Activated naive CD4-positive, alpha-beta T cell treated with anti-CD3 and anti-CD28 coated beads for 36 hours (primary cell): ENCODE measurements at regions of chr1 and their contacts with region 1.

Region 1: DNA sequence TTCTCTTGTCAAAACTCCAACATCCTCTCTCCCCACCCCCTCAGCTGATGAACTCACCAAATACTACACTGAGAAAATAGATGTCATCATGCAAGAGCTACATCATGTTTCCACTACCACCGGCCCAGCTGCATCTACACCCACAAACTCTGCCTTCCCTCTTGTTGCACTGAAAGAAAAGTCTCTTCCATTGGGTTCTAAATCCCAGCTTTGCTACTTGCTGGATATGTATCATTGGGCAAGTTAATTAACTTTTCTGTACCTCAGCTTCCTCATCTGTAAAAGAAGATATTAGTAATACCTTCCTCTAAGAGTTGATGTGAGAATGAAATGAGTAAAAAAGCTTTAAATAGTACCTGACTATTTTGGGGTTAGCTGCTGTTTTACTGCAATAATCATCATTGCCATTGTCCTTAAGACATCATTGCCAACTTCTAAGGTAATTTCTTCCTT is 108.6 kb downstream of the OLFML2B start:
- DNase-seq: peak; percentile 83
- H3K4me3 Mint-ChIP-seq: no peak overlapping the region
- H3K27ac Mint-ChIP-seq: no peak overlapping the region
- H3K4me1 Mint-ChIP-seq: peaks cover 35% of the 10 kb centered on the region
- H3K27me3 Mint-ChIP-seq: no peaks in the 10 kb centered on the region

Region 2: DNA sequence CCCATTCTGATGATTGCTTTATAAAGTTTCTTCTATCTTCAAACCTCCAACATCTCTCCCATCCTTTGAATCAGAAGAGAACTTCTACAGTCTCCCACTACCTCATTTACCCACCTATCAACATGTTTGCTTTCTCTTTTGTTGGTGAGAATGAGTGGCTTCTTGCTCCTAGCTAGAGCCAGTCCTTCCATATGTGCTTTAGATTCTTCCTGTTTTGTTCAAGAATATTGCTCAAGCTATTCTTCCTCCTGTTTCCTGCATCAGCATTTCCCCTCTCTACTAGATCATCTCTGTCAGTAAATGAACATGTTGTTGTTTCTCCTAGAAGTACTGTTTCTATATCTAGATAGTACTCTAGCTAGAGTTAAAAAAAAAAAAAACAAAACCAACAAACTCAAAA is 142.7 kb before region 1 on chr1:
- CTCF ChIA-PET with region 1: no interaction called
- intact Hi-C with region 1: loop called (anchors 1 kb)
- DNase-seq: no peak
- H3K4me3 Mint-ChIP-seq: no peak overlapping the region
- H3K27ac Mint-ChIP-seq: no peak overlapping the region
- H3K4me1 Mint-ChIP-seq: peaks cover 29% of the 10 kb centered on the region
- H3K27me3 Mint-ChIP-seq: no peaks in the 10 kb centered on the region

Region 3: DNA sequence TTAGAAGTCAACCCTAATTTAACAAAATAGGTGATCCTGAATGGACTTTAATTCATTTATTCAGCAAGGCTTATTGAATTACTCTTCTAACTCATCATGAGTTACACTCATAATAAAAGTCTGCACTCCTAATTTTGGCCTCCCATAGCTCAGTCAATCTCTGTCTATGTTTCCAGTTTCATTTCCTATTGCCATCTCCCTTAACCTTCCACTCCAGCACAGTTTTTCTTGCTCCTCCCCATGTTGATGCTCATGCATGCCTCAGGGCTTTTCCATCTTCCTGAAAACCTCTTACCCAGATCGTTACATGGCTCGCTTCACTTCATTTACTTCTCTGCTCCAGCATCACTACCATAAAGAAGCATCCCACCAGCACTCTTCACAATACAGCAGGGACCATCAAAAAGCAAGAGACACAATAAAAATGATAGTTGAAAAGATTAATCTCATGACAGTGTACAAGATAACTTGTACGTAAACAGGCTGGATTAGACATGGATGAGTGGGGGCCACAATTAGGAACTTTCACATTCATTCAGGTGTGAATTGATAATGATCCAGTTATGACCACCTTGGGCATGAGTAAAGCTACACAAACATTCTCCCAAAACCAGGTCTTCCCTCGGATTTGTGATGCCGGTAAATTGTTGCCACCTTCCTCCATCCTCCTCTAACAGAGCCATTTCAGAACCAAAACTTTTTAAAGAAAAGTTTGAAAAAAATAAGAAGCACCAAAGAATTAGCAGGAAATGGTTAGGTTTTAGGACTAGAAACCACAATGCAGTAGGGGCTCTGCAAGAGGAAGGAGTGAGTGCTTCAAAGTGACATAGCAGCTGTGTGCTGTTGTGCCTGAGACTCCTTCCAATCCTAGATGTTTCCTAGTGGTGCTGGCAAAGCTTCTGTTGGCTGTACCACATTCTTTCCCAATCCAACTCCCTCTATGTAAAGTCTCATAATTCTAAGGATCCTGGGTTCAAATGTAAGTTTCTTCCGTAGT is 18.8 kb after region 1 on chr1:
- CTCF ChIA-PET with region 1: interaction called, 10 read pairs
- intact Hi-C with region 1: loop called (anchors 1 kb)
- DNase-seq: peak; percentile 27
- H3K4me3 Mint-ChIP-seq: peak overlapping the region; percentile 48
- H3K27ac Mint-ChIP-seq: peak overlapping the region; percentile 83
- H3K4me1 Mint-ChIP-seq: peaks cover 53% of the 10 kb centered on the region
- H3K27me3 Mint-ChIP-seq: no peaks in the 10 kb centered on the region

Region 4: DNA sequence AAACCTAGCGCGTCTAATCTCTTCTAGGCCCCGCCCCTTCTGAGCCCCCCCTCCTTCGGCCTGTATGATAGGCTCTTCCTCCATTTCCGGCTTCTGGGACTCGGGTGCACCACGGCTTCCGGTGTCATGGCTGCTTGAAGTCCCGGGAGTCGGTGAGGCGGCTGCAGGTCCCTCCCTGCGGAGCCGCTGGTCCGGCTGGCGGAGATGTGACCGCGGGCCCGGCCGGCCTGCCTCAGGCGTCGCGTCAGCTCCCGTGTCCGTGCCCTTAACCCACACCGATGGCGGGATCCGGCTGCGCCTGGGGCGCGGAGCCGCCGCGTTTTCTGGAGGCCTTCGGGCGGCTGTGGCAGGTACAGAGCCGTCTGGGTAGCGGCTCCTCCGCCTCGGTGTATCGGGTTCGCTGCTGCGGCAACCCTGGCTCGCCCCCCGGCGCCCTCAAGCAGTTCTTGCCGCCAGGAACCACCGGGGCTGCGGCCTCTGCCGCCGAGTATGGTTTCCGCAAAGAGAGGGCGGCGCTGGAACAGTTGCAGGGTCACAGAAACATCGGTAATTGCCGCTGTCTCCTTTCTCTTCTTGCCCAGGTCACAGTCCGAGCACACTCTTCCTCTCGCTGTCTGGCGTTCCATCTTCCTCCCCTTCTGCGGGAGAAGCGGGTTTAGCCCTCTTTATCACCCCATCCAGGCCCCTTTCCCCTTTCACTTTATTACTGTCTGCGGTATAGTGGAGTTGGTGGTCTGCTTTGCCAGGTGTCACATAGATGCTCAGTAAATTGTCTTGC is 582.8 kb after region 1 on chr1 and contains the start of gene UHMK1:
- CTCF ChIA-PET with region 1: no interaction called
- intact Hi-C with region 1: loop called (anchors 5 kb)
- DNase-seq: peak; percentile 96
- H3K4me3 Mint-ChIP-seq: peak within 1 kb of the TSS; percentile 84
- H3K27ac Mint-ChIP-seq: peak within 1 kb of the TSS; percentile 89
- H3K4me1 Mint-ChIP-seq: peaks cover 38% of the 10 kb centered on the region
- H3K27me3 Mint-ChIP-seq: no peaks in the 10 kb centered on the region
- total RNA-seq, gene UHMK1: 43.4 to 43.7 TPM

Region 5: GRCh38 chr1:162561037-162561616 is 646.0 kb after region 1 on chr1:
- CTCF ChIA-PET with region 1: no interaction called
- intact Hi-C with region 1: loop called (anchors 10 kb)
- DNase-seq: peak; percentile 98
- H3K4me3 Mint-ChIP-seq: peak overlapping the region; percentile 92
- H3K27ac Mint-ChIP-seq: peak overlapping the region; percentile 91
- H3K4me1 Mint-ChIP-seq: peaks cover 35% of the 10 kb centered on the region
- H3K27me3 Mint-ChIP-seq: no peaks in the 10 kb centered on the region